ENCODE measurements at regions of chr16 and their contacts with region 1.

Region 1: DNA sequence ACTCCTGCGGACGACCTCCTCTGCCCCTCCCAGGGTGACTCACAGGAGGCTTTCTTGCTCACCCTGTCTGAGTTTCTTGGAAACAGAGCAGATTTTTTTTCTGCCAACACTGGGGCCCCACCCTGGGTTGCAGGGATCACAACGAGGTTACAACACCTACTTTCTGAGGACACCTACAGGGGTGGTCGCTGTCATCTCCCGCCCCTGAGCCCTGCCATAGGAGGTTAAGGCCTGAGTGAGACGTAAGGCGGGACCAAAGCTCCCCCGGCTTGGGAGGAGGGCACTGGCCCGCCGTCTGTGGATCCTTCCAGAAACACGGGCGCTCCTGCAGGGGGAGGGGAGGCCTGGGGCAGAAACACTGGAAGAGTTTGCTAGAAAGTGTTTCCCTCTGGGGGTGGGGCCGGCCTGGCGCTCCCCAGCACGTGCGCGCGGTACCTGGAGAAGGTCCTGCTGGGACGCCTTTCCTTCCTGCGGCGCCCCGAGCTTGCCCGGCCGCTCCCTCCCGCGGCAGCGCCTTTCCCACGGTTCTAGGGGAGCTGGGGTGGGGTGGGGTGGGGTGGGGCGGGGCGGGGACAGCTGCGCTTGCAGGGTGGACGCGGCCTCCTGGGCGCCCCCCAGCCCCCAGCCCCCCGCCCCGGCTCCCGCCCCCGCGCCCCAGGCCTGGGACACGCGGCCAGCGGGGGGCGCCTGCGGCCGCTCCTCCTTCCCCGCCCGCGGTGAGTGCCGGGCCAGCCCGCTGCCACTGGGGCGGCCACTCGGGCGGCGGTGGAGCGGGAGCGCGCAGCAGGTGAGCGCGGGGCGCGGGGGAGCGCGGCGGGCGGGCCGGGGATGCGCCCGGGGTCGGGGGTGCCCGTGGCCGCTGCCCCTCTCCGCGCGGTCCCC is 20.7 kb upstream of the ADCY7 start:
- DNase-seq: peak; percentile 16
- H3K4me3 ChIP-seq: peak overlapping the region; percentile 46 to 79 (median 64)
- H3K27ac ChIP-seq: no peak overlapping the region
- H3K4me1 ChIP-seq: peaks cover 9% of the 10 kb centered on the region
- H3K27me3 ChIP-seq: peaks cover 3% of the 10 kb centered on the region in 2 experiments
- CTCF ChIP-seq: peak in 1 of 2 donors; percentile 18
- POLR2A ChIP-seq: no peak

Region 2: DNA sequence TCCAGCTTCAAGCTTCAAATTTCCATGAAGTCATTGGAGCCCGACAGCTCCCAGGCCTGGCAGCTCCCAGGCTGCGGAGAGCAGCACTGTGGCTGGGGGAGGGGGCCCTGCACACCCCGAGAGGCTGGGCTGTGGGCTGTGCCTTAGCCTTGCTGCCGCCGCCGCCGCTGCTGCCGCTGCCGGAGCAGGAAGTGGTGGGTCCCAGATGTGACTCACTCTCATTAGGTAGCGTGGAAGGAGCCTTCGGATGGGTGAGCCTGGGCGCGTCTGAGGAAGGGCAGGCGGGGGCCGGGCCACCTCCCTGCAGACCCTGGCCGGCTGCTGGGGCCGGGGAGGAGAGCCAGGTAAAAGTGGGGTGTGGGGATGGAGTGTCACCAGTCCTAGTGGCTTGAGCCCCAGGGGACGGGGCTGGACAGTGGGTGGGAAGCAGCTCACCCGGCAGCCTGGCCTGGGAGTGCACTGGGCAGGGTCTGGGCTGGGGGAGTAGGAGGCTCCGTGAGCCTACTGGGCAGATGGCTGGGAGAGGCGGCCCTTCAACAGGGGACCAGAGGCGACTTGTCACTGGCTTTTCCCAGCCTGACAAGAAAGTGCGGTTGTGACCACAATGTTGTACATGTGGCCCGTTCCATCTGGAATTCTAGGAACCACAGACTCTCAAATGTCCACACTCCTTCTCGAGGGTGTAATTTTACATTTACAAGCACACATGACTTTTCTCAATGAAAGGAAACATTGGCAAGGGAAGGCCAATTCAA is 20.9 kb after region 1 on chr16 and contains the start of gene ADCY7:
- CTCF ChIA-PET with region 1: no interaction called
- POLR2A ChIA-PET with region 1: no interaction called
- dilution Hi-C with region 1: no loop called
- intact Hi-C with region 1: loop called (anchors 1 kb)
- DNase-seq: peak; percentile 38
- H3K4me3 ChIP-seq: peak within 1 kb of the TSS in 1 of 3 experiments; percentile 13
- H3K27ac ChIP-seq: peak within 1 kb of the TSS; percentile 43
- H3K4me1 ChIP-seq: peaks cover 14% of the 10 kb centered on the region
- H3K27me3 ChIP-seq: no peaks in the 10 kb centered on the region
- CTCF ChIP-seq: no peak
- POLR2A ChIP-seq: no peak
- total RNA-seq, gene ADCY7: 9.3 and 9.7 TPM in 2 replicates

Region 3: DNA sequence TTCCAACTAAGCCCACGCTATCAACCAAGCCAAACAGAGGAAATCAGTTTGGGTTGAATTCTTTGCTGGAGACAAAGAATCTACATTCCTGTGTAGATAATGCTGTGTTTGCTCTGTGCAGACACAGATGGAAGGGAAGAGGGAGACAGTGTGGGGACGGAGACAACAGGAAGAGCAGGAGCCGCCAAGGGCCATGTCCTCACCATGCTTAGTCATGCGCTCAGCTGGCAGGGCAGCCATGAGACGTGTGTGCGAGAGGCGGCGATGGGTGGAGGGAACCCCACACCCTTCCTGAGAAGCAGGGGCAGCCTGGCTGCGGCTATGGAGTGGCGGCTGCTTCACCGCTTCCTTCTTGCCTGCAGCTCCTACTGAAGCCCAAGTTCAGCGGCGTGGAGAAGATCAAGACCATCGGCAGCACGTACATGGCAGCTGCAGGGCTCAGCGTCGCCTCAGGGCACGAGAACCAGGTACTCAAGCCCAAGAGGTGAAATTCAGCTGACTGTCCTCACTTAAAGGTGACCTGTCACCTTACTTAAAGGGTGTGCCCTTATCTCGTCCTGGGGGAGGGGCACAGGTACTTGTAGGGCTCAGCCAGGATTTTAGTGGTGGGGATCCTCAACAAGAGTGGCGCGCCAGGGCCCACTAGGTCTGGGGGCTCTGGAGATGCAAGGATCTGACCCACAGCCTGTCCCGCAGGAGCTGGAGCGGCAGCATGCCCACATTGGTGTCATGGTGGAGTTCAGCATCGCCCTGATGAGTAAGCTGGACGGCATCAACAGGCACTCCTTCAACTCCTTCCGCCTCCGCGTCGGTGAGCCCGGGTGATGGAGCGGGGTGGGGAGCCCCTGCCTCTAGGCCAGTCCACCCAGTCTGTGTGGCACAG is 68.2 kb after region 1 on chr16:
- CTCF ChIA-PET with region 1: no interaction called
- POLR2A ChIA-PET with region 1: no interaction called
- dilution Hi-C with region 1: no loop called
- intact Hi-C with region 1: loop called (anchors 2 kb)
- DNase-seq: peak; percentile 51
- H3K4me3 ChIP-seq: no peak overlapping the region
- H3K27ac ChIP-seq: peak overlapping the region; percentile 46
- H3K4me1 ChIP-seq: peaks cover 12% of the 10 kb centered on the region
- H3K27me3 ChIP-seq: no peaks in the 10 kb centered on the region
- CTCF ChIP-seq: no peak
- POLR2A ChIP-seq: no peak